Ovary (tissue), 10 donors: ENCODE measurements at regions of chr11 and their contacts with region 1.

Region 1: DNA sequence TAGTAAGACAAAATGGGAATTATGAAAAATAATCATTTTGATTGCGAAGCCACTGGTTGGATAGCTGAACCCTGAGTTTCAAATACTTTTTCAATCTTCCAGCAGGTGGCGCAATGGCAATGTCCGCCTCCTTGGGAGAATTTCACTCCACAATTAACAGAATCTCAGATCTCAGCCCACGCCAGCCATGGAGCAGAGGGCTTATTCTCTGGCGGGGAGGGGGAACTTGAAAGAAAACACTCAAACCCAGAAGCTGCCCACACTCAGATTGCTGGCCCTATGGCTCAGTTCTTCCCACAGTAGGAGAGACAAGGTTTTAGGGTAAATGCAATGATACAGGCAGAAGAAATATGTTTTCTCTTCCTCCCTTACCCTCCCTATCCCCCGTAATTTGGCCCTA is 38.7 kb upstream of the RCN1 start:
- DNase-seq: peak; percentile 32 to 59 (median 49)
- H3K4me3 ChIP-seq: no peak overlapping the region
- H3K27ac ChIP-seq: no peak overlapping the region
- H3K4me1 ChIP-seq: no peaks in the 10 kb centered on the region
- H3K27me3 ChIP-seq: no peaks in the 10 kb centered on the region
- CTCF ChIP-seq: peak; percentile 56 to 67 (median 62)
- EP300 ChIP-seq: no peak
- POLR2A ChIP-seq: no peak

Region 2: GRCh38 chr11:32032478-32032877 is 19.7 kb before region 1 on chr11:
- intact Hi-C with region 1: no loop called
- DNase-seq: no peak
- H3K4me3 ChIP-seq: no peak overlapping the region
- H3K27ac ChIP-seq: no peak overlapping the region
- H3K4me1 ChIP-seq: no peaks in the 10 kb centered on the region
- H3K27me3 ChIP-seq: no peaks in the 10 kb centered on the region
- CTCF ChIP-seq: no peak
- EP300 ChIP-seq: no peak
- POLR2A ChIP-seq: no peak

Region 3: GRCh38 chr11:32176223-32176934 is 124.2 kb after region 1 on chr11:
- intact Hi-C with region 1: loop called (anchors 2 to 5 kb)
- DNase-seq: peak; percentile 52 to 80 (median 73)
- H3K4me3 ChIP-seq: no peak overlapping the region
- H3K27ac ChIP-seq: no peak overlapping the region
- H3K4me1 ChIP-seq: no peaks in the 10 kb centered on the region
- H3K27me3 ChIP-seq: no peaks in the 10 kb centered on the region
- CTCF ChIP-seq: peak; percentile 54 to 76 (median 72)
- EP300 ChIP-seq: no peak
- POLR2A ChIP-seq: no peak

Region 4: GRCh38 chr11:32297611-32298011 is 245.4 kb after region 1 on chr11:
- intact Hi-C with region 1: loop called in 3 of 4 experiments (anchors 5 to 10 kb)
- DNase-seq: no peak
- H3K4me3 ChIP-seq: no peak overlapping the region
- H3K27ac ChIP-seq: no peak overlapping the region
- H3K4me1 ChIP-seq: no peaks in the 10 kb centered on the region
- H3K27me3 ChIP-seq: no peaks in the 10 kb centered on the region
- CTCF ChIP-seq: peak in 1 of 3 donors; percentile 19
- EP300 ChIP-seq: no peak
- POLR2A ChIP-seq: no peak

Region 5: GRCh38 chr11:32302821-32303220 is 250.6 kb after region 1 on chr11:
- intact Hi-C with region 1: loop called in 3 of 4 experiments (anchors 5 to 10 kb)
- DNase-seq: no peak
- H3K4me3 ChIP-seq: no peak overlapping the region
- H3K27ac ChIP-seq: no peak overlapping the region
- H3K4me1 ChIP-seq: no peaks in the 10 kb centered on the region
- H3K27me3 ChIP-seq: no peaks in the 10 kb centered on the region
- CTCF ChIP-seq: no peak
- EP300 ChIP-seq: no peak
- POLR2A ChIP-seq: no peak